Endothelial cell of umbilical vein (primary cell): ENCODE measurements at regions of chr5 and their contacts with region 1.

Region 1: GRCh38 chr5:62779010-62779422 is 200.4 kb downstream of the LRRC70 start:
- DNase-seq: peak; percentile 52
- H3K4me3 ChIP-seq: no peak overlapping the region
- H3K27ac ChIP-seq: no peak overlapping the region
- H3K4me1 ChIP-seq: no peaks in the 10 kb centered on the region
- H3K27me3 ChIP-seq: no peaks in the 10 kb centered on the region
- CTCF ChIP-seq: peak; percentile 66 to 69
- POLR2A ChIP-seq: no peak

Region 2: DNA sequence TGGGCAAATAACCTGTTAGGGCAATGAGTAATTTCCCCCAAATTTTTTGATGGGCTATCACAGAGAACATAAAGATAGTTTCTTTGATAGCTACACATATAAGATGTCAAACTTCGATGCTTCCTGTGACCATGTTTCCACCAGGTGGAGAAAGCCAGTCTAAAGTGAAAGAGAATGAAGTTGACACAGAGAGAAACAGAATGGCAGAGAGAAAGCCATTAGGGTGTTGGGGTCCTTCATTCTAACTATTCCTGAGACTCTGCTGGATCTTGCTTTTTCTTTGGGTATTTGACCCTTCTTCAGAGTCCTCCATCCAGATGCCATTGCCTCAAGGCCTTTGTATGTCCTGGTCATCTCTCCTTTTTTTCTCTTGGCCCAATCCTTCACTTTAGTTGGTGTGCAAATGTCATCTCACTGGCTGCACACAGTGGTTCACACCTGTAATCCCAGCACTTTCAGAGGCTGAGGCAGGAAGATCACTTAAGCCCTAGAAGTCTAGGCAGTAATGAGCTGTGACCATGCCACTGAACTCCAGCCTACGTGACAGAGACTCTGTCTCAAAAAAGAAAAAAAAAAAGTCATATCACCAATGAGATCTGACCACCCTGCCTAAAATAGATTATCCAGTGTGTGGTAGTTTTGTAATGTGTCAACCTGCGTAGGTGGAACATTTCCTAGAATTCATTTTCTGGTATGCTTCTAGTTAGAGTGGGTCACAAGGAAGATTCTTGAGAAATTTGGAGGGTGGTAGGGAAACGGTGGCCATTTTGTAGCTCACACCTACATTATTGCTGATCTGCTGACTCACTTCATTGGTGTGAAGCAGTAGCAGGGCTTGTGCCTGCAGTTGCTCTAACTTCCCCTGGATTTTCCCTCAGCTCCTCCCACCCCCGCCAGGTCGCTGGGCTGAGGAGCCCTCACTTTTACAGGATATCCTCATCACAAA is 493.8 kb before region 1 on chr5:
- CTCF ChIA-PET with region 1: no interaction called
- POLR2A ChIA-PET with region 1: no interaction called
- dilution Hi-C with region 1: no loop called
- intact Hi-C with region 1: no loop called
- DNase-seq: no peak
- H3K4me3 ChIP-seq: no peak overlapping the region
- H3K27ac ChIP-seq: no peak overlapping the region
- H3K4me1 ChIP-seq: no peaks in the 10 kb centered on the region
- H3K27me3 ChIP-seq: peaks cover 0 to 4% of the 10 kb centered on the region in 2 experiments
- CTCF ChIP-seq: no peak
- POLR2A ChIP-seq: no peak

Region 3: GRCh38 chr5:62450259-62450658 is 328.8 kb before region 1 on chr5:
- CTCF ChIA-PET with region 1: interaction called, 11 read pairs
- POLR2A ChIA-PET with region 1: no interaction called
- dilution Hi-C with region 1: no loop called
- intact Hi-C with region 1: no loop called
- DNase-seq: no peak
- H3K4me3 ChIP-seq: no peak overlapping the region
- H3K27ac ChIP-seq: no peak overlapping the region
- H3K4me1 ChIP-seq: no peaks in the 10 kb centered on the region
- H3K27me3 ChIP-seq: no peaks in the 10 kb centered on the region
- CTCF ChIP-seq: no peak
- POLR2A ChIP-seq: no peak